Heart right ventricle (tissue), 16 donors: ENCODE measurements at regions of chr3 and their contacts with region 1.

Region 1: DNA sequence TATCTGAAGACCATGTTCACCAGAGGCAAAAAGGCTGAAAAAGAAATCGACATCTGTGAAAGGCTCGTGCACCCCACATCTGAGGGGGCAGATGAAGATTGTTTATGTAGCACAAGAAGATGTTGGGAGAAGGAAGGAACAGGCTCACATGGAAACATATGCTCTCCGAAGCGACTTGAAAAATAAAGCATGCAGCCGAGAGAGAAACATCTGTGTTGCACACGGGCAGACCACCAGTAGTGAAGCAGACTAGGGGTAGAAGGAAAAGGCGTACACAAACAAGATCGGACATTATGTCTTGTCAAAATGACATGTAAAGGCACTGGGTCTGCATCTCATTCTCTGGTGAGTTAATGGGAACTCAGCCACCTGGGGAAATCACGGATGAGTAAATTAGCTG is 356.5 kb downstream of the ZIC4 start:
- DNase-seq: no peak
- ATAC-seq: no peak
- H3K4me3 ChIP-seq: no peak overlapping the region
- H3K27ac ChIP-seq: no peak overlapping the region
- H3K4me1 ChIP-seq: no peaks in the 10 kb centered on the region
- H3K27me3 ChIP-seq: no peaks in the 10 kb centered on the region
- CTCF ChIP-seq: no peak

Region 2: GRCh38 chr3:146975476-146975875 is 74.3 kb before region 1 on chr3:
- intact Hi-C with region 1: loop called in 1 of 10 experiments (anchors 10 kb)
- DNase-seq: no peak
- ATAC-seq: no peak
- H3K4me3 ChIP-seq: no peak overlapping the region
- H3K27ac ChIP-seq: no peak overlapping the region
- H3K4me1 ChIP-seq: no peaks in the 10 kb centered on the region
- H3K27me3 ChIP-seq: no peaks in the 10 kb centered on the region
- CTCF ChIP-seq: no peak

Region 3: GRCh38 chr3:147924755-147925154 is 874.9 kb after region 1 on chr3:
- intact Hi-C with region 1: loop called in 1 of 10 experiments (anchors 5 kb)
- DNase-seq: no peak
- ATAC-seq: peak in 1 of 8 donors; percentile 20
- H3K4me3 ChIP-seq: no peak overlapping the region
- H3K27ac ChIP-seq: no peak overlapping the region
- H3K4me1 ChIP-seq: peaks cover 0 to 6% (median 0%) of the 10 kb centered on the region in 9 donors
- H3K27me3 ChIP-seq: no peaks in the 10 kb centered on the region
- CTCF ChIP-seq: no peak